Prostate gland (tissue), 2 donors: ENCODE measurements at regions of chr3 and their contacts with region 1.

Region 1: GRCh38 chr3:152574461-152575079 is 260.4 kb upstream of the P2RY1 start:
- DNase-seq: peak; percentile 25
- H3K4me3 ChIP-seq: no peak overlapping the region
- H3K27ac ChIP-seq: no peak overlapping the region
- H3K4me1 ChIP-seq: no peaks in the 10 kb centered on the region
- H3K27me3 ChIP-seq: no peaks in the 10 kb centered on the region
- CTCF ChIP-seq: peak in 3 of 4 experiments; percentile 33 to 57 (median 37)
- POLR2A ChIP-seq: no peak

Region 2: DNA sequence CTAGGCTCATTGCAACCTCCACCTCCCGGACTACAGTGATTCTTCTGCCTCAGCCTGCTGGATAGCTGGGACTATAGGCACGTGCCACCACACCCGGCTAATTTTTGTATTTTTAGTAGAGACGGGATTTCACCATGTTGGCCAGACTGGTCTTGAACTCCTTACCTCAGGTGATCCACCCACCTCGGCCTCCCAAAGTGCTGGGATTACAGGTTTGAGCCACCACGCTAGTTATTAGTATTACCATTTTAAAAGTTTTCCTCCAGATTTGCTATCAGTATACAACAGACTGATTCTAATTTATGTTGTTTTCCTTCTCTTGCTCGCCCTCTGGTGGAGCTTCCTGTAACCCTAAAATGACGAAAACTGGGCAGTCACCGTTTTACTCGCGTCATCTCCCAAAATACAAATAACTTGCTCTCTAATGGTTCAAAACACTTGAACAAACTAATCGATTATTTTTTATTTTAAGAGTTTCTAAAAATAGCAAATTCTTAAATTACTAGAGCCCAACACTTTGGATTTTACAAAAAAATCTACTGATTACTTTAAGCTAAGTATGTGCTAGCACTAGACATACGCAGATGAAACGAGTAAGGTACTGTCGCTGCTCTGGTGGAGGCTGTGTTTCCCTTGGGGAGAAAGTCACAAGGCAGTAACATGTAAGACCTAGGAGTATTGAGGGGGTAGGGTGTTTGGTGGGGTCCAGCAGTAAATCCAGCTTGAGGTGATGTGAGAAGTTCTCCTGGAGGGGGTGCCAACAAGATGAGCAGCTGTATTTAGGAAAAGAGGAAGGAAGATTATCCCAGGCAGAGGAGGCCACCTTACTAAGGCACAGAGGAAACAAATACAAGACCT is 102.5 kb before region 1 on chr3:
- intact Hi-C with region 1: loop called (anchors 10 kb)
- DNase-seq: peak; percentile 28
- H3K4me3 ChIP-seq: no peak overlapping the region
- H3K27ac ChIP-seq: no peak overlapping the region
- H3K4me1 ChIP-seq: no peaks in the 10 kb centered on the region
- H3K27me3 ChIP-seq: no peaks in the 10 kb centered on the region
- CTCF ChIP-seq: peak in 3 of 4 experiments; percentile 51 to 60 (median 52)
- POLR2A ChIP-seq: no peak

Region 3: GRCh38 chr3:152719264-152719663 is 144.7 kb after region 1 on chr3:
- intact Hi-C with region 1: no loop called
- DNase-seq: no peak
- H3K4me3 ChIP-seq: no peak overlapping the region
- H3K27ac ChIP-seq: no peak overlapping the region
- H3K4me1 ChIP-seq: no peaks in the 10 kb centered on the region
- H3K27me3 ChIP-seq: peaks cover 2% of the 10 kb centered on the region
- CTCF ChIP-seq: no peak
- POLR2A ChIP-seq: no peak